Gastrocnemius medialis (tissue), 4 donors: ENCODE measurements at regions of chr12 and their contacts with region 1.

Region 1: DNA sequence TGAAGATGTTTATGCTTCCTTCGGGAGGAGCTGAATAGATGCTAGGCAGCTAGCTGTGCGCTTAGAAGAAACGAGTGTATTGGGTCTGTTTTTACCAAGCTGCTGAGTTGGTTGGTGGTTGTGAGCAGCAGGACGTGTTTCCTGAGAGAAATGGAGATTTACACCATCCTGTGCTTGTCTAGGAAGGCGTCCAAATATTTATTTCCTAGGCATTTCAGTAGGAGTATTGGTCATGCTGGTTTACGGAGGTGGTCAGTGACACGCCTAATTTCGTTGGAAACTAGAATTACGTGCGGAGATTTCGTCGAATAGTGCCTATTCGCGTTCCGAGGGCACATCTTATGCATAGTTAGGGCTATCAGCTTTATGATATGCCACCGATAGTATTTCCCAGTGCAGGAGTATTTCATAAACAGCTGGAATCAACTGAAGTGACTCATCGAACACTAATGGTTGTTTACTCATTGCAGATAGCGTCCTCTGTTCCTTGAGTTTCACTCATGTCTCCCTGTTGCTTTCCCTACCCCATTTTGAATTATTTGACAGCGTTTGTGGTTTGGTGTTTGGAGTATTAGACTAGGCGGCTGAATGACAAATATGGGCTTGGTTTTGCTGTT is 780 bp downstream of the TBC1D15 start:
- DNase-seq: no peak
- ATAC-seq: peak; percentile 49 to 80
- H3K4me3 ChIP-seq: peak overlapping the region; percentile 61 to 84 (median 78)
- H3K27ac ChIP-seq: peak overlapping the region; percentile 91 to 98 (median 97)
- H3K4me1 ChIP-seq: peaks cover 51% of the 10 kb centered on the region in 2 donors
- H3K27me3 ChIP-seq: no peaks in the 10 kb centered on the region
- CTCF ChIP-seq: no peak
- POLR2A ChIP-seq: no peak

Region 2: GRCh38 chr12:71663561-71664294 is 176.6 kb before region 1 on chr12 and contains the start of gene ZFC3H1:
- in situ Hi-C with region 1: loop called in 1 of 4 experiments (anchors 10 kb)
- intact Hi-C with region 1: loop called (anchors 2 kb)
- DNase-seq: peak; percentile 95 to 96
- ATAC-seq: peak; percentile 97 to 98
- H3K4me3 ChIP-seq: peak within 1 kb of the TSS; percentile 82 to 99 (median 96)
- H3K27ac ChIP-seq: peak within 1 kb of the TSS; percentile 93 to 97 (median 96)
- H3K4me1 ChIP-seq: peaks cover 27 to 31% of the 10 kb centered on the region in 2 donors
- H3K27me3 ChIP-seq: no peaks in the 10 kb centered on the region
- CTCF ChIP-seq: peak in 2 of 5 experiments; percentile 17 to 38
- POLR2A ChIP-seq: peak; percentile 96
- total RNA-seq, gene ZFC3H1: 6.5 to 26.4 (median 9.1) TPM

Region 3: GRCh38 chr12:71772735-71773134 is 67.6 kb before region 1 on chr12:
- in situ Hi-C with region 1: loop called in 1 of 4 experiments (anchors 10 kb)
- intact Hi-C with region 1: no loop called
- DNase-seq: no peak
- ATAC-seq: no peak
- H3K4me3 ChIP-seq: no peak overlapping the region
- H3K27ac ChIP-seq: no peak overlapping the region
- H3K4me1 ChIP-seq: peaks cover 29 to 34% of the 10 kb centered on the region in 2 donors
- H3K27me3 ChIP-seq: no peaks in the 10 kb centered on the region
- CTCF ChIP-seq: no peak
- POLR2A ChIP-seq: no peak